Naive thymus-derived CD4-positive, alpha-beta T cell (primary cell): ENCODE measurements at regions of chr3 and their contacts with region 1.

Region 1: GRCh38 chr3:115071611-115072010 is 75.5 kb downstream of the ZBTB20 start:
- DNase-seq: no peak
- ATAC-seq: no peak
- H3K4me3 ChIP-seq: no peak overlapping the region
- H3K4me3 Mint-ChIP-seq: peak overlapping the region in 1 of 10 donors; percentile 1
- H3K27ac ChIP-seq: no peak overlapping the region
- H3K27ac Mint-ChIP-seq: peak overlapping the region in 2 of 9 donors; percentile 10 to 32
- H3K4me1 ChIP-seq: peaks cover 0 to 7% of the 10 kb centered on the region in 2 donors
- H3K4me1 Mint-ChIP-seq: peaks cover 14 to 77% (median 67%) of the 10 kb centered on the region in 7 donors
- H3K27me3 ChIP-seq: no peaks in the 10 kb centered on the region
- H3K27me3 Mint-ChIP-seq: no peaks in the 10 kb centered on the region

Region 2: DNA sequence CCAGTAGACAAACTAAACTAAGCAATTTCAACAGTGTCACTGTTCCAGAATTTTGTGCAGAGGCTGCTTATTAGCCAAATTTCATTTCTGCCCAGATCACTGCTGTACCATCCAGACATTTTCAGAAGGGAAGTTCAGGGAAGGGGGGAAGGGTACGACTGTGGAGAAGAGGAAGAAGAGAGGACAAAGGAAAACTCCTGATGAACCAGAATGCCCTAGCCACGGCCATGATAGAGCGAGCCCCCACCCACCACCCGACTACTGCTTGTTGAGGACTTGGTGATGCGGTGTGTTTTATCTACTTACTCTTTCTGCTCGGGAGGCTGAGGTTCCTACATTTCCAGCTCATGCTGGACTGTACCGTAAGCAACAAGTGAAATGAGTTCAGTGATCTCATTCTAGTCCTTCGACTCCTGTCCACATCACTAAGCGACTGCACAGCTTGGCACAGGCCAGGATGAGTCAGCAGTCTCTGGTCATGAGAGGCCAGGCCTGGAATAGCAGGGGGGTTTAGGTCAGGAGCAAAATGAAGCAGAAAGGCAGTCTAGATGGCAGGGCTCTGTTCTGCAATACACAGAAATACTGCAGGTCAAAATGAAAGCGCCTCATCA is 446.9 kb before region 1 on chr3:
- CTCF ChIA-PET with region 1: no interaction called
- POLR2A ChIA-PET with region 1: no interaction called
- intact Hi-C with region 1: no loop called
- DNase-seq: no peak
- ATAC-seq: peak; percentile 22
- H3K4me3 ChIP-seq: no peak overlapping the region
- H3K4me3 Mint-ChIP-seq: no peak overlapping the region
- H3K27ac ChIP-seq: no peak overlapping the region
- H3K27ac Mint-ChIP-seq: no peak overlapping the region
- H3K4me1 ChIP-seq: no peaks in the 10 kb centered on the region
- H3K4me1 Mint-ChIP-seq: peaks cover 0 to 10% (median 4%) of the 10 kb centered on the region in 7 donors
- H3K27me3 ChIP-seq: no peaks in the 10 kb centered on the region
- H3K27me3 Mint-ChIP-seq: no peaks in the 10 kb centered on the region

Region 3: DNA sequence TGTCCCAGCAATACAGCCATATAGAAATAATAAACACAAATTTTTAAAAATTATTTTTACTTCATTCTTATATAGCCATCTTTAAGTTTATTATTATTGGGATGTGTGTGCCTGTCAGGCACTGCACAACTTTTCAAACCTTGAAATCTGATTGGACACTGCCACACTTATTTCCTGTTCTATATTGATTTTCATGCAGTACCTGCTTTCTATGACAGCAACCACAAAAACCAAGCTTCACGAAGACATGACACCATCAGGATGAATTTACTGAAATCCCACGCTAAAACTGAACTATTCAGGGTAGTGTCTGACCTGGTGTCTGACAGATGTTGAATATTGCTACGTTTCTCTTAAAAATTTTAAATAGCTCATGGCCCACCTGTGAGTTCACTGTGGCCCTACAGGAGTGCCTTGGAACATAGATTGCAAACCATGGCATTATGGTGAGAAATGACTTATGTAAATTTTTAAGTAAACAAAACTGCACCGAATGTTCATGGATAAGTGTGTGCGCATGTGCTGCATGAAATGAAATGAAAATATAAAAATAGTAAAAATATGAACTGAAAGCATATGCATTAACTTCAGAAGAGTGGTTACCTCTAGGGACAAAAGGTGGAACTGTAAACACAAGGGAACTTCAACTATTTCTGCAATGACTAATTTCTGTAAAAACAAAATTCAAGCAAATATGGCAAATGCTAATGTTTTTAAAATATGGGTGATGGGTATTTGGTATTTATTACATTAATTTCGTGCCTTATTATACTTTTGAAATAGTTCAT is 76.9 kb before region 1 on chr3:
- CTCF ChIA-PET with region 1: no interaction called
- POLR2A ChIA-PET with region 1: no interaction called
- intact Hi-C with region 1: no loop called
- DNase-seq: no peak
- ATAC-seq: no peak
- H3K4me3 ChIP-seq: no peak overlapping the region
- H3K4me3 Mint-ChIP-seq: no peak overlapping the region
- H3K27ac ChIP-seq: no peak overlapping the region
- H3K27ac Mint-ChIP-seq: no peak overlapping the region
- H3K4me1 ChIP-seq: no peaks in the 10 kb centered on the region
- H3K4me1 Mint-ChIP-seq: peaks cover 0 to 23% (median 4%) of the 10 kb centered on the region in 7 donors
- H3K27me3 ChIP-seq: no peaks in the 10 kb centered on the region
- H3K27me3 Mint-ChIP-seq: no peaks in the 10 kb centered on the region

Region 4: GRCh38 chr3:115085197-115085865 is 13.7 kb after region 1 on chr3:
- CTCF ChIA-PET with region 1: no interaction called
- POLR2A ChIA-PET with region 1: interaction called, 3 read pairs
- intact Hi-C with region 1: loop called in 1 of 2 experiments (anchors 2 kb)
- DNase-seq: no peak
- ATAC-seq: no peak
- H3K4me3 ChIP-seq: no peak overlapping the region
- H3K4me3 Mint-ChIP-seq: peak overlapping the region in 4 of 10 donors; percentile 1 to 48 (median 46)
- H3K27ac ChIP-seq: no peak overlapping the region
- H3K27ac Mint-ChIP-seq: peak overlapping the region in 2 of 9 donors; percentile 48 to 68
- H3K4me1 ChIP-seq: no peaks in the 10 kb centered on the region
- H3K4me1 Mint-ChIP-seq: peaks cover 0 to 74% (median 59%) of the 10 kb centered on the region in 7 donors
- H3K27me3 ChIP-seq: no peaks in the 10 kb centered on the region
- H3K27me3 Mint-ChIP-seq: no peaks in the 10 kb centered on the region